ENCODE measurements at regions of chr1 and their contacts with region 1.

Region 1: DNA sequence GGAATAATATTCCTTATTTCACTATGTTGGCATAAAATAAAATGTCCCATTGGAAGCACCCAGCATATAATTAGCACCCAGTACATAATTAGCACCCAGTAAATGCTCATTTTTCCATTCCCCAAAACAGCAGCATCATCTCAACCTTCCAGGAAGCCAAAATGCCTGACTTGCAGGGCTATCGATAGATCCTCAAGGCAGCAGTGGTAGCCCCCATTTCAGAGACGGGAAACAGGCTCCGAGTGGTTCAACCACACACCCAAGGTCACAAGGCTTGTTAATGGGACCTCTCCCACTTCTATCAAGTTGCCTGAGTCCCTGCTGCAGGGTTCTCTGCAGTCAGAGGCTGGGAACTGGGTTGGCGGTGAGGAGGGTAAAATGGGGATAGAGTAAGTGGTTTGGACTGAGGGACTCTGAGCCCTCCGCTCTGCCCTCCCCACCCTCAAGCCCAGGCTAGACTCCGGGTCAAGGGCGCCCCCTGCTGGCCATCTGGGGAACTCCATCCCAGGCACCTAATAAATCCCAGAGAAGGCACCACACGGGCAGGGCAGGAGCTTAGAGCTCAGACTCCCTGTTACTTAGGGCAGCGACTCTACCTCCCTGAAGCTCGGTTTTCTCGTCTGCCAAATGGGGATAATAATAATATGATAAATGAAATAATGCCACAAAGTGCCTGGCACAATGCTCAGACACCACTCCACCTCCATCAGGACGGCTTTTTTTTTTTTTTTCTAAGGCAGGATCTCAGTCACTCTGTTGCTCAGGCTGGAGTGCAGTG is 21.9 kb upstream of the LAPTM5 start:
- DNase-seq: peak; percentile 55 to 96 (median 79)
- ATAC-seq: peak; percentile 71 to 77 (median 72)
- H3K4me3 ChIP-seq: no peak overlapping the region
- H3K27ac ChIP-seq: no peak overlapping the region
- H3K4me1 ChIP-seq: peaks cover 0 to 6% (median 0%) of the 10 kb centered on the region in 3 donors
- H3K27me3 ChIP-seq: peaks cover 0 to 5% (median 0%) of the 10 kb centered on the region in 4 donors
- CTCF ChIP-seq: peak; percentile 84 to 98 (median 93)

Region 2: GRCh38 chr1:30418081-30418938 is 361.2 kb before region 1 on chr1:
- intact Hi-C with region 1: no loop called
- DNase-seq: no peak
- ATAC-seq: no peak
- H3K4me3 ChIP-seq: no peak overlapping the region
- H3K27ac ChIP-seq: no peak overlapping the region
- H3K4me1 ChIP-seq: no peaks in the 10 kb centered on the region
- H3K27me3 ChIP-seq: no peaks in the 10 kb centered on the region
- CTCF ChIP-seq: no peak

Region 3: DNA sequence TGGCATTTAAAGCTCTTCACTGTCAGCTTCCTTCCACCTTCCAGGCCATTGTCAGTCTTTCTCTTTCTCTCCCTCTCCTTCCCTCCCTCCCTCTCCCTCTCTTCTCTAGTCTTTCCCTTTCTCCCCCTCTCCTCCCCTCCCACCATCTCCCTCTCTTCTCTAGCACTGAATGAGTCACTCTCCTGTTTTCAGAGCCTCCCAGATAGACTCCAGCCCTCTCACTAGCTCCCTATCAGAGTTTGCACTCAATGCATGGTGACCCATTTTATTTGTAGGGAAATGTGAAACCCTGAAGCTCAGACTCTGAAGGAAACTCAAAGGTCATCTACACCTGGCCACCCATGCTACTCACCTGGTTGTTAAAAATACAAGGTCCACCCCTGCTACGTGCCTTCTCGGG is 51.7 kb before region 1 on chr1:
- intact Hi-C with region 1: loop called in 1 of 3 experiments (anchors 5 kb)
- DNase-seq: no peak
- ATAC-seq: no peak
- H3K4me3 ChIP-seq: no peak overlapping the region
- H3K27ac ChIP-seq: no peak overlapping the region
- H3K4me1 ChIP-seq: no peaks in the 10 kb centered on the region
- H3K27me3 ChIP-seq: no peaks in the 10 kb centered on the region
- CTCF ChIP-seq: no peak